T-cell (primary cell): ENCODE measurements at regions of chr2 and their contacts with region 1.

Region 1: DNA sequence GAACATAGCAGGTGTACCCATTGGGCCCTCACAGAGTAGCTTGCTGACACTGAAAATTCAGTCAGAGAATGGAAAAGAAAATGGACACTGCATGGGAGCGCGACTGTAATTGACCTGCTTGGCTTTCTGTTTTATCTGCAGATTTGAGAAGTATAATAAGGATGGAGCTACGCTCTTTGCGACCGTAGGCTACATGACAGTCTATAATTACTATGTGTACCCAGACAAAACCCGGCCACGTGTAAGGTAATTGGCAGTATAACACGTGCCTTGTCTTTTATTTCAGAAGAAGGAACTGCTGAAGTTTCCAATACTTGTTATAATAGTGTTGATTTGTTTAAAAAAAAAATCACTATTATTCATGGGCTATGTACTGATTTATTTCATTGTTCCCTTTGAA is 33.5 kb upstream of the METAP1D start:
- DNase-seq: no peak
- ATAC-seq: no peak
- H3K4me3 ChIP-seq: no peak overlapping the region
- H3K4me3 Mint-ChIP-seq: no peak overlapping the region
- H3K27ac ChIP-seq: no peak overlapping the region
- H3K27ac Mint-ChIP-seq: no peak overlapping the region
- H3K4me1 ChIP-seq: peaks cover 0 to 10% of the 10 kb centered on the region in 2 experiments
- H3K4me1 Mint-ChIP-seq: peaks cover 29 to 33% (median 32%) of the 10 kb centered on the region in 3 donors
- H3K27me3 ChIP-seq: no peaks in the 10 kb centered on the region
- H3K27me3 Mint-ChIP-seq: no peaks in the 10 kb centered on the region

Region 2: DNA sequence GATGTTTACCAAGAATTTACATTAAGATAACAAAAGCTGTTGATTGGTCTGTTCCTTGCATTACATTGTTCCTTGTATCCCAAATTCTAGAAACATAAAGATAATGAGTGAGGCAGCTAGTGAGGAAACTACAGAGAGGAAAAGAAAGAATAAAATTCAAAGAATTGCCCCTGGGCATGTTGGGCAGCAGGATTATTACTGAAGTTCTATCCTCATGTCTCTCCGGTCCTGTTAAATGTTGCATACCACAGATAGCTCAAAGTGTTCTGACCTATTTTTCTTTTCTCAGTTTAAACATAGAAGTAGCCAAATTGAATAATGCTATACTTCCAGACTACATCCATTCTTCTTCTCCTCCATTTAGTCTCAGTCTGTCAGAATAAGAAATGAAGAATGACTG is 337.2 kb before region 1 on chr2:
- CTCF ChIA-PET with region 1: no interaction called
- POLR2A ChIA-PET with region 1: no interaction called
- DNase-seq: no peak
- ATAC-seq: no peak
- H3K4me3 ChIP-seq: no peak overlapping the region
- H3K4me3 Mint-ChIP-seq: no peak overlapping the region
- H3K27ac ChIP-seq: no peak overlapping the region
- H3K27ac Mint-ChIP-seq: no peak overlapping the region
- H3K4me1 ChIP-seq: no peaks in the 10 kb centered on the region
- H3K4me1 Mint-ChIP-seq: no peaks in the 10 kb centered on the region
- H3K27me3 ChIP-seq: peaks cover 0 to 14% of the 10 kb centered on the region in 2 experiments
- H3K27me3 Mint-ChIP-seq: peaks cover 5 to 7% of the 10 kb centered on the region in 2 donors

Region 3: DNA sequence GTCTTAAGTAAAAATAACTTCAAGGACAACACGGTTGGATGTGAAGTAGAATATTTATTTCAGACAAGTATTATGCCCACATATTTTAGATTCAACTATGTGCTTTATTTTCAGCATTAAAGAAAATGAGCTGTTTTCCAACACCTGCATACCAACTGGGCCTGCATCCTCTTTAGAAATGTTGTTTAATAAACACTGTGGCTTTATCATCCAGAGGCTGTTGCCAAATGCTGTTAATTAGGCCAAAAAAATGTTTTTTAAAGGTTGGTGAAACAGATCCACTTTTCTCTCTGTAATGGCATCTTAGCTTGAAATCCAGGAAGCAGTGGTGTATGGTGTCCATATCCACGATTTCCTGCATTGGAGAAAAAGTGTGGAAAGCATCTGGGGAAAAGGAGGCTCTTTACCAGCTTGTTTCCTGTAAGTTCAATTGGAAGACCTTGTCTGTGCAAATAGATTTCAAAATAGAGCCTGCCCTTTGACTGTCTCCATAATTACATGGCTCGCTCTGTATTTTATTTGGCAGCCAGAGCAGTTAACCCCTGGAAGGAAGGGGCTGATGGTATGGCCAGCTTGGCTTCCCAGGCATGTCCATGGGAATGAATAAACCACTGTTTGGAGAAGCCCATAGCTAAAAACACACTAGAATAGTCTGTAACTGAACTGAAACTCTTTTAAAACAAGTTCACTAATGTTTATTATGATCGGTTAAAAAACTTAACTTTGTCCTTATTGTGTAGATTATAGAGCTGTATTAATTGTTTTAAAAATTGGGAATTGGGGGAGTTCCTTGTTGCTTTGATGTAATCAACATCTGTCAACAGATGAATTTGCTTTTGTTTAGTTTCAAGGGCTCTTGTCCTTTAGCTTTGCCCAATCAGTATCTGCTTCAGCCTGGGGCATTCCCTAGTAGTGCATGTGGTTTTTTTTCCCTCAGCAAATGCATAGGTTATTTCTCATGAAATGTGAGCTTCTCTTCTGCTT is 86.0 kb after region 1 on chr2:
- CTCF ChIA-PET with region 1: no interaction called
- POLR2A ChIA-PET with region 1: no interaction called
- DNase-seq: no peak
- ATAC-seq: no peak
- H3K4me3 ChIP-seq: no peak overlapping the region
- H3K4me3 Mint-ChIP-seq: no peak overlapping the region
- H3K27ac ChIP-seq: no peak overlapping the region
- H3K27ac Mint-ChIP-seq: no peak overlapping the region
- H3K4me1 ChIP-seq: no peaks in the 10 kb centered on the region
- H3K4me1 Mint-ChIP-seq: no peaks in the 10 kb centered on the region
- H3K27me3 ChIP-seq: no peaks in the 10 kb centered on the region
- H3K27me3 Mint-ChIP-seq: no peaks in the 10 kb centered on the region

Region 4: DNA sequence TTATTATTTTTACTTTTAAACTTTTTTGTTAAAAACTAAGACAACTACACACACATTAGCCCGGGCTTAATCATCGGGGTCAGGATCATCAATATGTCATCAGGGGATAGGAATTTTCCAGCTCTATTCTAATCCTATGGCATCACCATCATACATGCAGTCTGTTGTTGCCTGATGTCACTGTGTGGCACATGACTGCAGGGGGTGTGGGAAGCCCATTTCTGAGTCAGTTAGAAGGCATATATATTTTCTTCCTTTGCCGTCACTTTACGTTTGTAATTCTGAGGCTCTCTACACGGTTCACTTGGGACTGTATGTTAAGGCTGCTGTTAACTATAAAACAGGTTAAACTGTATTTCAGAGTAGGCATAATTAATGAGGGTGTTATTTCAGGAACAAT is 316.7 kb after region 1 on chr2:
- CTCF ChIA-PET with region 1: no interaction called
- POLR2A ChIA-PET with region 1: no interaction called
- DNase-seq: no peak
- ATAC-seq: no peak
- H3K4me3 ChIP-seq: no peak overlapping the region
- H3K4me3 Mint-ChIP-seq: no peak overlapping the region
- H3K27ac ChIP-seq: no peak overlapping the region
- H3K27ac Mint-ChIP-seq: no peak overlapping the region
- H3K4me1 ChIP-seq: peaks cover 3 to 15% of the 10 kb centered on the region in 2 experiments
- H3K4me1 Mint-ChIP-seq: peaks cover 27 to 31% (median 27%) of the 10 kb centered on the region in 3 donors
- H3K27me3 ChIP-seq: peaks cover 0 to 7% of the 10 kb centered on the region in 2 experiments
- H3K27me3 Mint-ChIP-seq: peaks cover 0 to 1% of the 10 kb centered on the region in 2 donors

Region 5: DNA sequence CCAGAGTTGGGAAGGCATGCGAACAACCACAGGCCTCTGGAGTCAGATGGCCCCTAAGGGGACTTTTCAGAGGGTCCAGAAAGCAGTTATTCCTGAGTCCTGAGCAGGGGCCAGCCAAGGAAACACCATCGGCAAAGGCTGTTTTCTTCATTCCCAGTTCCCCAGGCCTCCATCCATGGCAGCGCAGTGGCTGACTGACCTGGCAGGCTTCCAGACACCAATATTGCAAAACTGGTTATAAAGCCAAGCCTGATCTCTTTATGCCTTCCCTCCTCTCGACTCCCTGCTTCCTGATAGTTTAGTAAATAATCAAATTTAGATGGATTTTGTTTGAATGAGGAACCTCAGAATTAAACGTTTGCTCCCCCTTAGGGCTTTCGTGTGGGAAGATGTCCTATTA is 327.7 kb after region 1 on chr2:
- CTCF ChIA-PET with region 1: interaction called in 1 of 2 experiments, 15 read pairs
- POLR2A ChIA-PET with region 1: no interaction called
- DNase-seq: no peak
- ATAC-seq: no peak
- H3K4me3 ChIP-seq: no peak overlapping the region
- H3K4me3 Mint-ChIP-seq: no peak overlapping the region
- H3K27ac ChIP-seq: no peak overlapping the region
- H3K27ac Mint-ChIP-seq: no peak overlapping the region
- H3K4me1 ChIP-seq: no peaks in the 10 kb centered on the region
- H3K4me1 Mint-ChIP-seq: peaks cover 0 to 3% (median 2%) of the 10 kb centered on the region in 3 donors
- H3K27me3 ChIP-seq: peaks cover 0 to 4% of the 10 kb centered on the region in 2 experiments
- H3K27me3 Mint-ChIP-seq: peaks cover 4 to 6% of the 10 kb centered on the region in 2 donors